Activated CD4-positive, alpha-beta memory T cell treated with anti-CD3 and anti-CD28 coated beads for 36 hours (primary cell): ENCODE measurements at regions of chr9 and their contacts with region 1.

Region 1: DNA sequence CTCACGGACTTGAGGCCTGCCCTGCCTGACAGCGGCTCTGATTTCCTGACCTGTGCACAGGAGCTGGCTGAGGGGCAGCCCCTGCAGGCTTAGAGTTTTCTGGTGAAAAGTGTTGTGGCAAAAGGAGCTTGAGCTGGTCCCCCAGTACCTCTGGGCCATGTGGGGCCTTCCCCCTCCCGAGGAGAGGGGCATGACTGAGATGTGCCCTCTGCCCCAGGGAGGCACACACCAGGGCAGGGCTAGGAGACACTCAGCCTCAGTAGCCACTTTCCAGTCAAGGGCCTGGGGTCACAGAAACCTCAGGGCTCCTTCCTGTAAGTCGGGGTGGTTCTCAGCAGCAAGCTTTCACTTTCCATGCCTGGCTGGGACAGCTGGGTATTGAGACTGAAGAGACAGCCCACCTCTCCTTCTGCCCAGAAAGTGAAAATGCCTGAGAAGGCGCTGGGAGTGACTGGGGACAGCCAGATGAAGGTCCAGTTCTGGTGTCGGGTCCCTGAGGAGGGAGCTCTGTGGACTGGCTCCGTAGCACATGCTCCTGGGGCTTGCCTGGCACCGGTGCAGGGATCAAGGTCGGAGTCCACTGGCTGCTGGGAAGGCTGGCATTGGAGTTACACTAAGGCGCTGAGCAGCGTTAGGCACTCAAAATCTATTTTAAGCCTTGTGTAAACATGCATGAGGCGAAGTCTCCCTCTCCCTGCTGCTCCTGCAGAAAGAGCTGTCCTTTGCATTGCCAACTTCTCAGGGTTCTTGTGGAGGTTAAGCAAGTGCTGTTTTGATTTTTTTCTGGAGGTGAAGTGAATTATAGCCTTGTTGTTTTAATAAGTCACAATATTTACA is 394.9 kb downstream of the GADD45G start:
- DNase-seq: peak; percentile 85
- H3K4me3 Mint-ChIP-seq: peak overlapping the region; percentile 63
- H3K27ac Mint-ChIP-seq: peak overlapping the region; percentile 73
- H3K4me1 Mint-ChIP-seq: peaks cover 34% of the 10 kb centered on the region
- H3K27me3 Mint-ChIP-seq: no peaks in the 10 kb centered on the region

Region 2: GRCh38 chr9:89919169-89919681 is 80.5 kb before region 1 on chr9:
- CTCF ChIA-PET with region 1: interaction called, 3 read pairs
- POLR2A ChIA-PET with region 1: no interaction called
- intact Hi-C with region 1: loop called (anchors 1 kb)
- DNase-seq: peak; percentile 71
- H3K4me3 Mint-ChIP-seq: no peak overlapping the region
- H3K27ac Mint-ChIP-seq: peak overlapping the region; percentile 4
- H3K4me1 Mint-ChIP-seq: peaks cover 15% of the 10 kb centered on the region
- H3K27me3 Mint-ChIP-seq: no peaks in the 10 kb centered on the region

Region 3: GRCh38 chr9:90053027-90053426 is 53.3 kb after region 1 on chr9:
- CTCF ChIA-PET with region 1: no interaction called
- POLR2A ChIA-PET with region 1: no interaction called
- intact Hi-C with region 1: no loop called
- DNase-seq: peak; percentile 50
- H3K4me3 Mint-ChIP-seq: no peak overlapping the region
- H3K27ac Mint-ChIP-seq: no peak overlapping the region
- H3K4me1 Mint-ChIP-seq: no peaks in the 10 kb centered on the region
- H3K27me3 Mint-ChIP-seq: peaks cover 27% of the 10 kb centered on the region